H1 (cell line): ENCODE measurements at regions of chr11 and their contacts with region 1.

Region 1: DNA sequence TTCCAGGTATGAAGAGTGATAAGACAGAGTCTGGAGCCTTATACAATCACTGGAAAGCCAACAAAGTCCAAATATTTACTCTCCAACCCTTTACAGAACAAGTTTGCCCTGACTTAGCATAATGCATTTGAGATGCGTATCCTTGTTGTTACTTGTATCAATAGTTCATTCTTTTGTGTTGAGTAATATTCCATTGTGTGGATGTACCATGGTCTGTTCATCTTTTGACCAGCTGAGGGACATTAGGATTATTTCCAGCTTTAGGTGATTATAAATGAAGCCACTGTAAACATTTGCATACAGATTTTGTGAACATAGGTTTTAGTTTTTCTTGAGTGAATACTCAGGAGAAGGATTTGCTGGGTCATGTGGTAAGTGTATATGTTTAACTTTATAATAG is 9.7 kb downstream of the SDHAF2 start:
- DNase-seq: no peak
- H3K4me3 ChIP-seq: no peak overlapping the region
- H3K27ac ChIP-seq: no peak overlapping the region
- H3K4me1 ChIP-seq: no peaks in the 10 kb centered on the region
- H3K27me3 ChIP-seq: no peaks in the 10 kb centered on the region
- CTCF ChIP-seq: no peak
- EP300 ChIP-seq: no peak
- POLR2A ChIP-seq: no peak
- RAD21 ChIP-seq: no peak

Region 2: GRCh38 chr11:61460474-61460881 is 20.9 kb after region 1 on chr11:
- CTCF ChIA-PET with region 1: interaction called, 26 read pairs
- POLR2A ChIA-PET with region 1: no interaction called
- DNase-seq: no peak
- H3K4me3 ChIP-seq: no peak overlapping the region
- H3K27ac ChIP-seq: no peak overlapping the region
- H3K4me1 ChIP-seq: no peaks in the 10 kb centered on the region
- H3K27me3 ChIP-seq: no peaks in the 10 kb centered on the region
- CTCF ChIP-seq: no peak
- EP300 ChIP-seq: no peak
- POLR2A ChIP-seq: no peak
- RAD21 ChIP-seq: no peak